Heart right ventricle (tissue), 16 donors: ENCODE measurements at regions of chr5 and their contacts with region 1.

Region 1: DNA sequence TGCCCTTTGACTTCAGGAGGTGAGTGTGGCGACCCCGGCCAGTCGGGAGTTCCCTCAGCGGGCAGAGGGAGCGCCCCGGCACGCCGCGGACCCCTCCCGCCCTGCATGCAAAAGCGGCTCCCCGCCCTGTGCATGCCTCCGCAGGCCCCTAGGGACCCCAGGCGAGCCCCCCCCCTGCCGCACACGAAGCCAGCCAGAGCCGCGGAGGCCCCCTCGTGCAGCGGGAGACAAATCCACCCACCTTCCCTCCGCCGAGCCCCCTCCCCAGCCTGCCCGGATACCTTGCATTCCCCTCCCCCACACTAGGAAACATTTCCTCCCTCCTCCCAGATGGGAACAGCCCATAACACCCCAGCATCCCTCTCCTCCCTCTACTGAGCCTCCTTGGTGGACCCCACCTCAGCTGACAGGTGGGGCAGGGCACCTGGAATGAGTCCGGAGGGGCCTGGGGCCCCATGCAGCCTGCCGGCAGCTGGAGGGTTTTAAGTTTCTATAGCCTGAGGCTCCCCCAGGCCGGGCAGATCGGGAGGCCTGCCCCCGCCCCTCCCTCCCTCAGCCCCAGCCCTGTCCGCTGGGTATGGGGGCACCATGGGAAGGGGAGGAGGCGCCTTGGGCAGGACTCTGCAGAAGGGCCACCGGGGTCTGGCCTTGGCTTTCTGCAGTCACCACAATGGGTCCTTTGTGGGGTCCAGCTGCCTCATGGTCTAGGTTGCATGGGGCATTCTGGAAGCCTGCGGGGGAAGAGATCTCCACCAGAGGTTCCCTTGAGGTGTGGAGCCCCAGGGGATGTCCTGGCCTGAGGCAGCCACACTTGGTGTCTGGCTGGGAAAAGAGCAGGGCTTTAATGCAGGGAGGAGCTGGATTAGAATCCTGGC is 601 bp downstream of the ERGIC1 start:
- DNase-seq: no peak
- ATAC-seq: peak; percentile 4 to 54 (median 20)
- H3K4me3 ChIP-seq: peak overlapping the region; percentile 82 to 98 (median 88)
- H3K27ac ChIP-seq: peak overlapping the region; percentile 80 to 91 (median 88)
- H3K4me1 ChIP-seq: peaks cover 2 to 62% (median 31%) of the 10 kb centered on the region in 9 donors
- H3K27me3 ChIP-seq: no peaks in the 10 kb centered on the region
- CTCF ChIP-seq: peak in 1 of 9 donors; percentile 5

Region 2: DNA sequence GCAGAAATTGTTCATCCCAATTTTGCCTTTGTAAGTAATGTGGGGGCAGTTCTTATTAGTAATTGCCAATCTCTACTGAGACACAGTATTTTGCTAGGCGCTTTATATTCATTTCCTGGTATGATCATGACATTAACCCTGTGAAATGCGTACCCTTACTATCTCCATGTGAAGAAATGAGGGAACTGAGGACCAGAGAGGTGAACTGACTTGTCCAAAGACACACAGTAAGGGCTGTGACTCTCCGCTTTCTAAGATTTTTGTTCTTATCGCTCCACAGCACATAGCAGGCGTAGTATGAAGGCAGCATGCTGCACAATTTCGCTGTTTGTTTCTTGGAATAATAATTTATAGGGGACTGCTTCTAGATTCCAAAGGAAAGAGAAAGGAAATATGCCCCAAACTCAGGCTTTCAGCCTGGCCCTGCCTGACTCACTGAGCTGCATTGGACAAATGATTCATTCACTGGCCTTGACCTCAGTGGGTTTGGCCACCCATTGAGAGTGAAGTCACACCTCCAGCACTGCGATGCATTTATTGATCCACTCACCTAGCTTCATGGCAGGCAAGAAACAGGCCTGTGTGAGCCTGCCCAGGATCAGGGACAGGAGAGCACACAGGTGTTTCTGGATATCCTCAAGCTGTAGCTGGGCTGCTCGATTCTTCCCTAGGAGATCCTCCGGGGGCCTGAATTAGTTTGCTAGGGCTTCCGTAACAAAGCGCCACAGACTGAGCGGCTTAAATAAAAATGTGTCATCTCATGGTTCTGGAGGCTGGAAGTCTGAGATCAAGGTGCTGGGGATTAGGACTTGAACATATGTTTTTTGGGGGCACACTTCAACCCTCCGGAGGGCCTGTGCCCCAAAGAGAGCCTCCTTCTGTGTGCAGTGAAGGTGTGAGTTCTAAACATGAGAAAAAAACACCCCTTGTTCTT is 56.5 kb before region 1 on chr5:
- intact Hi-C with region 1: loop called in 3 of 10 experiments (anchors 2 to 10 kb)
- DNase-seq: no peak
- ATAC-seq: peak in 2 of 8 donors; percentile 16 to 45
- H3K4me3 ChIP-seq: peak overlapping the region in 1 of 10 donors; percentile 11
- H3K27ac ChIP-seq: peak overlapping the region in 8 of 10 donors; percentile 37 to 100 (median 72)
- H3K4me1 ChIP-seq: peaks cover 0 to 71% (median 4%) of the 10 kb centered on the region in 9 donors
- H3K27me3 ChIP-seq: no peaks in the 10 kb centered on the region
- CTCF ChIP-seq: no peak

Region 3: GRCh38 chr5:173108914-173109313 is 274.3 kb after region 1 on chr5:
- intact Hi-C with region 1: no loop called
- DNase-seq: no peak
- ATAC-seq: no peak
- H3K4me3 ChIP-seq: no peak overlapping the region
- H3K27ac ChIP-seq: no peak overlapping the region
- H3K4me1 ChIP-seq: peaks cover 0 to 10% (median 0%) of the 10 kb centered on the region in 9 donors
- H3K27me3 ChIP-seq: no peaks in the 10 kb centered on the region
- CTCF ChIP-seq: no peak